ENCODE measurements at regions of chr6 and their contacts with region 1.

Region 1: GRCh38 chr6:139364302-139364981 is 10.0 kb downstream of the CITED2 start:
- DNase-seq: no peak
- H3K4me3 ChIP-seq: no peak overlapping the region
- H3K27ac ChIP-seq: no peak overlapping the region
- H3K4me1 ChIP-seq: peaks cover 8% of the 10 kb centered on the region
- H3K27me3 ChIP-seq: no peaks in the 10 kb centered on the region
- CTCF ChIP-seq: peak; percentile 73 to 92 (median 85)
- POLR2A ChIP-seq: no peak

Region 2: GRCh38 chr6:138817822-138818308 is 546.6 kb before region 1 on chr6:
- intact Hi-C with region 1: loop called (anchors 10 kb)
- DNase-seq: peak in 1 of 2 donors; percentile 92
- H3K4me3 ChIP-seq: no peak overlapping the region
- H3K27ac ChIP-seq: peak overlapping the region; percentile 56
- H3K4me1 ChIP-seq: peaks cover 9% of the 10 kb centered on the region
- H3K27me3 ChIP-seq: no peaks in the 10 kb centered on the region
- CTCF ChIP-seq: no peak
- POLR2A ChIP-seq: no peak

Region 3: DNA sequence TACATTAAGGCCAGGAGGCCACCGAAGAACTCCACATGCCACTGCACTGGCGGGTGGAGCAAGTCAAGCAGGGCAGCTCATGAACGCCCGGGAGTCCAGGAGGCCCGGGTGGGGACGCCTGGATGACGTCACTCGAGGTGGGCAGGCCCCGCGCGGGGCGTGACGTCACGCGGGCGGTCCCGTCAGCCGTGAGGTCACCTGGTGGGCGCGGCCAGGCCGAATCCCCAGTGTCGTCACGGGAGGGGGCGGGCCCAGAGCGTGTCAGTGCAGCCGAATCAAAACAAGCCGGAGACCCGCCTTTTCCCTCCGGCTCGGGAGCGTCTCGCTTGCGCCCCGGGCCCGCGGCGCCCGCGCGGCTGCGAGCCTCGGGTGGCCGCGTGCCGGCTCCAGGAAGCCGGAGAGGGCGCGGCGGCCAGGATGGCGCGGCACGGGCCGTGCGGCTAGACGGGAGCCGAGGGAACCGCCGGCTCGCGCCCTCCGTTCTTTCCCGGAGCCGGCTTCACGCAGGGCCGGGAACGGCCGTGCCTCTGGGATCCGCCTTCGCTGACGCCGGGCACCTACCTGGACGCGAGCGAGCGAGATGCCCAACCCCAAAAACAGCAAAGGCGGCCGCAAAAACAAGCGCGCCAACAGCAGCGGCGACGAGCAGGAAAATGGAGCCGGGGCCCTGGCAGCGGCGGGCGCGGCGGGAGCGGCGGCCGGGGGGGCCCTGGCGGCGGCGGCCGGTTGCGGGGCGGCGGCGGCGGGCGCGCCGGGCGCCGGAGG is 229.4 kb before region 1 on chr6 and contains the start of gene HECA:
- intact Hi-C with region 1: loop called (anchors 10 kb)
- DNase-seq: peak; percentile 98 to 99
- H3K4me3 ChIP-seq: peak within 1 kb of the TSS; percentile 73 to 81
- H3K27ac ChIP-seq: peak within 1 kb of the TSS; percentile 98
- H3K4me1 ChIP-seq: peaks cover 35% of the 10 kb centered on the region
- H3K27me3 ChIP-seq: no peaks in the 10 kb centered on the region
- CTCF ChIP-seq: peak in 1 of 3 experiments; percentile 5
- POLR2A ChIP-seq: peak; percentile 5 to 91
- total RNA-seq, gene HECA: 35.8 TPM

Region 4: DNA sequence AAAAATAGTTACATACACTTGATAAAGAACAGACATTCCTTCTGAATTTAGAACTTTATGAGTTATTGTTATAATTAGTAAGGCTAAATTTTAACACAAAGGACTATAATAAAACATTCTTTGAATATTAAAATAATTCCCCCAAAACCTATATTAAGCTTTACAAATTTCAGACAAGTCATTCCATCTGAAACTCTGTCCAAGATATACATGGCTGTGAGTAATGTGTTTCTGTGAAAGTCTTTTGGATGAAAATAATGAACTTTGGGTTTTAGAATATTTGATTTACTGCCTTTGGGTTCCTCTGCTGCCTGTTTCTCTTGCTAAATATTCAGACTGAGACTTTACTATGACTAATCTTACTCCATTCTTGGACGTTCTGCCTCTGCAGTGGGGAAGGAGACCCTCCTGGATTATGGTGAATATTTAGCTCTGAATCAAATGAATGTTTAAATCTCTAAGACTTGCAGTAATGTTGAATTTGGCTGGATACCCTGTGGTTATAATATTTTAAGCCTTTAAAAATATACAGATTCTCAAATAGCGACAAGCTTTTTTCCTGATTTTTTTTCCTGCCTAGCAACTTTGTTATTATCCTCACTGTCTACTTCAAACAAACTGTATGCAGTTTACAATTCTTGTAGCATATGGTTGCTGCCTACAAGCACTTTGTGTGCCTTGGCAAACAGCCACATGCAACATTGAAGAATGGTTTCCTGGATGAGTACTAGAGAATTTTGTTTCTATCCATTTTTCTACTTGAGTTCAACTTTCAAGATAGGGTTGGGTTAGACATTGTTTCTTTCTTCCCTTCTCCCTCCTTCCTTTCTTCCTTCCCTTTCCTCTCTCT is 124.1 kb before region 1 on chr6:
- intact Hi-C with region 1: no loop called
- DNase-seq: no peak
- H3K4me3 ChIP-seq: no peak overlapping the region
- H3K27ac ChIP-seq: no peak overlapping the region
- H3K4me1 ChIP-seq: no peaks in the 10 kb centered on the region
- H3K27me3 ChIP-seq: no peaks in the 10 kb centered on the region
- CTCF ChIP-seq: no peak
- POLR2A ChIP-seq: no peak

Region 5: DNA sequence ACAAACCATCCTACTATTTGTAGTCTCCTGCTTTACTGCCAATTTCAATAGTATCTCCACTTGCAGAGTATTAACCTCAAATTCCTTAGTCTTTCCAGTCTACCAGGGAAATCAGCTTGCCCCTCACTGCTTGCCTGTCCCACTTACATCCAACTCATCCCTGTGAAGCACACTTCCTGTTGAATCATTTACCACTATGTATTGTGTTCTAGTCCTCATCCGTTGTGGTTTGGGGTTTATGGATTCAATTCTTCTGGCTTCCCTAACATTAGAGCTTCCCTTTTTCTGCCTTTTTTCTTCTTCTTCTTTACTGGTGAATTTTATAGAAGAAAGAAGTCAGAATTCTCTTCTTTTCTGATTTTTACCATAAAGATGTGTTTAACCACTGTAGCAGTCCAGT is 67.5 kb before region 1 on chr6:
- intact Hi-C with region 1: no loop called
- DNase-seq: no peak
- H3K4me3 ChIP-seq: no peak overlapping the region
- H3K27ac ChIP-seq: no peak overlapping the region
- H3K4me1 ChIP-seq: no peaks in the 10 kb centered on the region
- H3K27me3 ChIP-seq: no peaks in the 10 kb centered on the region
- CTCF ChIP-seq: no peak
- POLR2A ChIP-seq: no peak

Measured in vagina (tissue), 2 donors.